Naive thymus-derived CD4-positive, alpha-beta T cell (primary cell): ENCODE measurements at regions of chr18 and their contacts with region 1.

Region 1: DNA sequence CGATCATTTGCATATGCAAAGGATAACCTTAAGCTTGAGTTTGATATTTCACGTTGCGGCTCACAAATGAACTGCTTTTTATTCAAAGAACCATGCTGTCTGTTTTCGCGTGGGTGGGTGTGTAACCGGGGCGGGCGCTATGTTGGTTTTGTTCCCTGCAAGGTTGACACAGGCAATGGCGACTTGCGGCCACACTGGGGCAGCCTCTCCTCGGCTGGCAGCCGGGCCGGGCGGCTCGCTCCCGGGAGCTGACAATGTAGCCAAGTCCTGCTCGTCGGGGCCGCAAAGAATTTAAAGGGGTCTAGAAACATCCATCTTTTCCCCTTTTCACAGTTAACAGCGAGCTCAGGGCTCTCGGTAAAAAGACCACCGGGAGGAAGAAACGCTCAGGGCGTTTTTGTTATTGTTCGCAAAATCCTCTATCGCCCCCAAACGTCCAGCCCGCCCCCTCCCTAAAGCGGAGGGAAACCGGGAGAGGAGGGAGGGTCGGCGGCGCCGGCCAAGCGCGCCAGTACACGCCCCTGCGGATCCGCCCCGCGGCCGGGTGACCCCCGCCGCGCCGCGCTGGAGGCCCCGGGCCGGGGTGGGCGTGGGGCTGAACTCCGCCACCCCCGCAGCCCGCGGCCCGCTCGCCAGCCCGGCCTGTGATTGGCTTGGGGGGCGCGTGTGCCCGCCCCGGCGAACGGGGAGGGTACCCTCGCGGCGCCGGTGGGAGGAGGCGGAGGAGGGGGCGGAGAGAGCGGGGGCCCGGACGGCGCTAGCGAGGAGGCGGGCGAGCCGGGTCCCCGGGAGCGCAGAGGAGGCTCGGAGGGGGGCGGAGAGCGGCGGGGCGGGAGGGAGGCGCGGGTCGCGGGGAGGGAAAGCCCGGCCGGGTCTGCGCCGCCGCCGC is at the start of gene NEDD4L:
- DNase-seq: peak; percentile 55 to 78 (median 73)
- ATAC-seq: peak; percentile 88
- H3K4me3 ChIP-seq: peak within 1 kb of the TSS; percentile 69
- H3K4me3 Mint-ChIP-seq: peak within 1 kb of the TSS; percentile 88 to 96 (median 93)
- H3K27ac ChIP-seq: peak within 1 kb of the TSS; percentile 54
- H3K27ac Mint-ChIP-seq: peak within 1 kb of the TSS; percentile 34 to 89 (median 70)
- H3K4me1 ChIP-seq: peaks cover 0 to 8% of the 10 kb centered on the region in 2 donors
- H3K4me1 Mint-ChIP-seq: peaks cover 18 to 30% (median 25%) of the 10 kb centered on the region in 7 donors
- H3K27me3 ChIP-seq: no peaks in the 10 kb centered on the region
- H3K27me3 Mint-ChIP-seq: peaks cover 0 to 57% (median 0%) of the 10 kb centered on the region in 5 donors
- total RNA-seq, gene NEDD4L: 3.7 to 10.3 (median 4.2) TPM

Region 2: DNA sequence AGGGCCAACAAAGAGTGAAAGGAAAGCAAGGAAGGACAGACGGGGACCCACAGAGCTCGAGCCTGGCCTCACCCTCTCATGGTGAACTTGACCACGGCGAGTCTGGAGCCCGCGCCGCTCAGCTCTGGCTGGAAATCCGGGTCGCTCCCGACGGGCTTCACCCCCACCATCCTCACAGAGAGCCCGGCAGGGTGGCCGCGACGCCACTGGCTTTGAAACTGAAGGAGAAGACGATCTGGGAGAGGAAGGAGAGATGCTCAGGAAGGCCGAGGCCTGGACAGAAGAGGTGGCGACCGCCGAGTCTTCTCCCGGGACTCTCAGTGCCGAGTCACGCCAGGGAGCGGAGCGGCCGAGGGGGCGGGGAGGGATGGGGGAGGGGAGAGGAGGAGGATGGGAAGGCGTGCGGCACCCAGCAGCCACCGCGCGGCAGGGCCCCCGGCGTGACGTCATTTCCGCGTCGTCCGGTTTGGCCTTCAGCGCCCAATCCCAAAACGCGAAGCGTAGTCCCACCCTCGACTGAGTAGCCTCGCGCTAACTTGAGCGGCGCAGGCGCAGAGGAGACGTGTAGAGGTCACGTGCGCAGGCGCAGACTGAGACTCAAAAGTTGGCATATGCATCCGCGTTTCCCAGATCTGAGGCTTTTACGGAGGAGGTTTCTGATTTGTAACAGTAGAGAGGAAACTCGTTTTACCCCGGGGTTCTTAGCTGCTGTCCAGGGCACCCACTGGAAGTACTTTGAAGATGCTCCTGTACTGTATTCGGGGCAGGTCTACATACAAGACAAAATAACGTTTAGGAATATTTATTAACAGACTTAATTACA is 1405.3 kb before region 1 on chr18 and contains the start of gene TXNL1:
- CTCF ChIA-PET with region 1: no interaction called
- POLR2A ChIA-PET with region 1: no interaction called
- intact Hi-C with region 1: loop called in 1 of 2 experiments (anchors 1 kb)
- DNase-seq: peak; percentile 95 to 99 (median 97)
- ATAC-seq: peak; percentile 98
- H3K4me3 ChIP-seq: peak within 1 kb of the TSS; percentile 69
- H3K4me3 Mint-ChIP-seq: peak within 1 kb of the TSS; percentile 88 to 100 (median 98)
- H3K27ac ChIP-seq: peak within 1 kb of the TSS; percentile 91
- H3K27ac Mint-ChIP-seq: peak within 1 kb of the TSS; percentile 93 to 99 (median 97)
- H3K4me1 ChIP-seq: peaks cover 17 to 20% of the 10 kb centered on the region in 2 donors
- H3K4me1 Mint-ChIP-seq: peaks cover 36 to 57% (median 49%) of the 10 kb centered on the region in 7 donors
- H3K27me3 ChIP-seq: no peaks in the 10 kb centered on the region
- H3K27me3 Mint-ChIP-seq: no peaks in the 10 kb centered on the region
- total RNA-seq, gene TXNL1: 32.4 to 65.5 (median 42.8) TPM

Region 3: DNA sequence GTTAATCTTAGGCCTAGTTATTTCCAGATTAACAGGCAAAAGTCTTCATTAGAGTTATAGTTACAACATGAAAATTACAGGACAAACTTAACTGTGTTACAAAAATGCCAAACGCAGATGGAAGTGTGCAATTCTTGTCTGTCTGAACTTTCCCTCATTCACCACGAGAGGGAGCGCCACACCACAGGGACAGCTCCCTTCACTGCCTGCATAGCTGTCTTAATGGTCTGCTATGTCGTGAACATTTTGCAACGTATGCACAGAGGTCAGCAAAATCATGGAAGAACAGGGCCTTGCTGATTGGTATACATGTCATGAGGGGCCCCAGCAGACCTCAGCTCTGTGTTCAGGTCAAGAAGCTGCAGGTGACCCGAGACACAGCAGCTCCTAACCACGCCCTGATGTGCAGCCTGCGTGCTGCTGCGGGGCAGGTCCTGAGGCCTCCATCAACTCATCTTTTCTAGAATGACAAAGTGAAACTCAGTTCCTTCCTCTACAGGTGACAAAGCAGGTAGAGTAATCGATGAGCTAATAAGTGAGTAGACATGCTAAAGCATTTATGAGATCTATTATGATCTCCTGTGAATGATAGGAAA is 161.8 kb before region 1 on chr18:
- CTCF ChIA-PET with region 1: no interaction called
- POLR2A ChIA-PET with region 1: no interaction called
- intact Hi-C with region 1: loop called (anchors 1 to 5 kb)
- DNase-seq: peak; percentile 2 to 48 (median 33)
- ATAC-seq: peak; percentile 79
- H3K4me3 ChIP-seq: no peak overlapping the region
- H3K4me3 Mint-ChIP-seq: no peak overlapping the region
- H3K27ac ChIP-seq: no peak overlapping the region
- H3K27ac Mint-ChIP-seq: no peak overlapping the region
- H3K4me1 ChIP-seq: no peaks in the 10 kb centered on the region
- H3K4me1 Mint-ChIP-seq: no peaks in the 10 kb centered on the region
- H3K27me3 ChIP-seq: no peaks in the 10 kb centered on the region
- H3K27me3 Mint-ChIP-seq: peaks cover 2 to 24% (median 20%) of the 10 kb centered on the region in 5 donors

Region 4: DNA sequence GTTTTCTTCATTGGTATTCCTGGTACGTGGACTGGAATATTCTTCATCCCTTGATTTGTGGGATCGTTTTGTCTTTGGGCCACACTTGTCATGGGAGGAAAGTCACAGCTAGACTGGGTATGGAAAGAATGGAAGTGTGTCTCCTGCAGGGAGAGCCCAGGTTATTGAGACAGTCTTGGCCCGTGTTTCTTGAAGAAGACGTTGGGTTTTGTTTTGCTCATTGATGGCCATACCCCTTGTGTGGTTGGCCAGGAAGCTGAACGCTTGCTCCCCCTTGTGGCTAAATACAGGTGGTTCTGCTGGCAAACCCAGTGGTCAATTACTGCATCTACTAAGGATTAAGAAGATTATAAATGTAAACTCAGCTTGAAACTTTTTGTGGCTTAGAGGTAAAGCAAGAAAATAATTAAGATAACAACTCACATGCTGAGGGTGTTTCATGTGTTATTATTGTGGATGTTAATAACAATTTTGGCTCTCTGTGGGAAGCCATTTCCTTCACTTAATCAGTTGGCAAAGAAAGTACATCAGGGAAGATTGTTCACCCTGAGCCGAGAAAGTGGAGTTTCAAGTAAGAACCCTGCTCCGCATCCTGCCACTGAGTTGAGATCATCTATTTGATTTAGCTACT is 92.1 kb after region 1 on chr18:
- CTCF ChIA-PET with region 1: no interaction called
- POLR2A ChIA-PET with region 1: no interaction called
- intact Hi-C with region 1: loop called (anchors 1 kb)
- DNase-seq: peak in 7 of 9 donors; percentile 13 to 42 (median 28)
- ATAC-seq: peak; percentile 79
- H3K4me3 ChIP-seq: no peak overlapping the region
- H3K4me3 Mint-ChIP-seq: no peak overlapping the region
- H3K27ac ChIP-seq: no peak overlapping the region
- H3K27ac Mint-ChIP-seq: no peak overlapping the region
- H3K4me1 ChIP-seq: no peaks in the 10 kb centered on the region
- H3K4me1 Mint-ChIP-seq: peaks cover 5 to 14% (median 8%) of the 10 kb centered on the region in 7 donors
- H3K27me3 ChIP-seq: no peaks in the 10 kb centered on the region
- H3K27me3 Mint-ChIP-seq: peaks cover 12 to 31% (median 24%) of the 10 kb centered on the region in 5 donors

Region 5: DNA sequence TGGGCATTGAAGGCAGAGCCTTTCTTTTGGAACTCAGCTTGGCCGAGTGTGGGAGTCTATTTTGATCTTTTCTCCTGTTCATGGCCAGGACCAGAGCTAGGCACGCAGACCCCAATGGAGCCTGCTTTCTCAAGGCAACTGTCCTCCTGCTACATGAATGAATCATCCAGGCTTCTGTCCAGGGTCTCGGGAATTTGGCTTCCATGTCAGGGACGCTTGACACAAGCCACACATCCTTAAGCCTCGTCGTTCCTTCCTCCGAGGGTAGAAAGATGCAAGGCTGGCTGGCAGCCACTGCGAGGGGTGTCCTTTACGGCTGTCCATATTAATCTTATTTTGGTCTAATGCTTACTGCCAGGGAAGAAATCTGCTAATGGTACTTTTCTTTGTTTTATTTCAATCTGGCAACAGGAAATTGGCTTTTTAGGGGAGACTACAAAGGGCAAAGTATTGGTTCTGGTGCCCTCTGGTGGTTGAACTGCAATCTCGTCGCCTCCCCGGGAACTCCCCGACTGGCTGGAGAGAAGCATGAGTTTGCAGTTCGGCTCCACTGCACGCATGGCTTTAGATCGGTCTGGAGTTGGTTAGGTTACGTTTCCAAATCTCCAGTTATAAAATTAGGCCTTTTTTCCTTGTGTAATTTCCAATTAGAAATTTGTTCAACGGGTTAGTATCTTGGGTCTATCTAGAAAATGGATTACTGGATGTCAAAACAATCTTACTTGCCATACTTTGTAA is 449.9 kb after region 1 on chr18:
- CTCF ChIA-PET with region 1: no interaction called
- POLR2A ChIA-PET with region 1: no interaction called
- intact Hi-C with region 1: loop called (anchors 1 to 5 kb)
- DNase-seq: peak; percentile 37 to 72 (median 64)
- ATAC-seq: peak; percentile 93
- H3K4me3 ChIP-seq: no peak overlapping the region
- H3K4me3 Mint-ChIP-seq: peak overlapping the region in 4 of 10 donors; percentile 22 to 56 (median 28)
- H3K27ac ChIP-seq: no peak overlapping the region
- H3K27ac Mint-ChIP-seq: peak overlapping the region in 2 of 9 donors; percentile 0 to 47
- H3K4me1 ChIP-seq: no peaks in the 10 kb centered on the region
- H3K4me1 Mint-ChIP-seq: peaks cover 5 to 11% (median 7%) of the 10 kb centered on the region in 7 donors
- H3K27me3 ChIP-seq: no peaks in the 10 kb centered on the region
- H3K27me3 Mint-ChIP-seq: peaks cover 19 to 45% (median 29%) of the 10 kb centered on the region in 5 donors

Region 6: GRCh38 chr18:59899298-59900221 is 1855.8 kb after region 1 on chr18 and contains the start of gene PMAIP1:
- CTCF ChIA-PET with region 1: no interaction called
- POLR2A ChIA-PET with region 1: no interaction called
- intact Hi-C with region 1: loop called in 1 of 2 experiments (anchors 10 kb)
- DNase-seq: peak; percentile 60 to 87 (median 69)
- ATAC-seq: peak; percentile 91
- H3K4me3 ChIP-seq: peak within 1 kb of the TSS; percentile 66
- H3K4me3 Mint-ChIP-seq: peak within 1 kb of the TSS; percentile 92 to 99 (median 98)
- H3K27ac ChIP-seq: peak within 1 kb of the TSS; percentile 86
- H3K27ac Mint-ChIP-seq: peak within 1 kb of the TSS; percentile 88 to 95 (median 94)
- H3K4me1 ChIP-seq: peaks cover 14 to 21% of the 10 kb centered on the region in 2 donors
- H3K4me1 Mint-ChIP-seq: peaks cover 22 to 52% (median 34%) of the 10 kb centered on the region in 7 donors
- H3K27me3 ChIP-seq: no peaks in the 10 kb centered on the region
- H3K27me3 Mint-ChIP-seq: no peaks in the 10 kb centered on the region
- total RNA-seq, gene PMAIP1: 5.8 to 95.1 (median 22.8) TPM